ENCODE measurements at regions of chr5 and their contacts with region 1.

Region 1: DNA sequence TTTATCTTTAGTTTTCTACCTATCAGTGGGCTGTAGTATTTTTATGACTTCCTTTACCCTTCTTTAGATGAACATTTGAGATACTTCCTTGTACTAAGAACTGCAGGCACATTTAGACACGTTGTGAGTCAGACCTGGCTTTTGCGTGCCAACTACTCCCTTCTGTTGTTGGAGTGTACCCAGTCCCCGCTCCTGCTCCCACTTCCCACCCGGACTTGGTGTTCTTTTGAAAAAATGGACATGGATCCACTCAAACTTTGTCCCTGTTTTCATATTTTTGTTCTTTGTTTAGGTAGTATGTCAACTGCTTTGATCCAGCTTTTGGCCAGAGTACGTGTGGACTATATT is 60.7 kb downstream of the PARP8 start:
- DNase-seq: peak; percentile 66
- H3K4me3 Mint-ChIP-seq: peak overlapping the region; percentile 19
- H3K27ac Mint-ChIP-seq: peak overlapping the region; percentile 75
- H3K4me1 Mint-ChIP-seq: peaks cover 63% of the 10 kb centered on the region
- H3K27me3 Mint-ChIP-seq: no peaks in the 10 kb centered on the region

Region 2: GRCh38 chr5:50738864-50739263 is 11.7 kb after region 1 on chr5:
- CTCF ChIA-PET with region 1: interaction called, 7 read pairs
- intact Hi-C with region 1: loop called (anchors 1 kb)
- DNase-seq: no peak
- H3K4me3 Mint-ChIP-seq: no peak overlapping the region
- H3K27ac Mint-ChIP-seq: no peak overlapping the region
- H3K4me1 Mint-ChIP-seq: peaks cover 48% of the 10 kb centered on the region
- H3K27me3 Mint-ChIP-seq: no peaks in the 10 kb centered on the region